H1 (cell line): ENCODE measurements at regions of chr3 and their contacts with region 1.

Region 1: DNA sequence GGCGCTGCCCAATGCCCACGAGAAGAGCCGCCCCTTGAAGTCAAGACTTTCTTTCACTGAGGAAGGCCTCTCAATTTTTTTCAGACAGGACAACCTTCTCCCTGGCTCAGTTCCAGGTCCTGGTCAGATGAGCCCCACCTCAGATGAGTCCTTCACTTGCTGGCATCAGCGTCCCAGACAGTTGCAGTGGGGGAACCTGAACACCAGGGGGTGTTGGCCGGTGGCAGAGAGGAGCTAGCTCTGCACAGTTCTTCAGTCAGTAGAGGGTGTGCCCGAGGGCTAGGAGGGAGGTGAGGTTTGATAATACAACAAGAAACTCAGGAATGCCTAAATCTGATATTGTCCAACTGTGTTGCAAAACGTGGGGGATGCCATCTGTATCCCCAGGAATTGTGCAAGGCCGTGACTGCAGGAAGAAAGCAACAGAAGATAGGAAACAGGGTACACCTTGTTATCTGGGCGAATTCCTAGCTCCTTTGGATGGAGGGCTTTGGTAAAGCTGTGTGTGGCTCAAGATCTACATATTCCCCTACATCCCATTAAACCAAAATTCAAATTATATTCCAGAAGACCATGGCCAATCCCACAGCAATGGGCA is 34.3 kb downstream of the CCR3 start:
- DNase-seq: peak; percentile 29 to 79
- H3K4me3 ChIP-seq: no peak overlapping the region
- H3K27ac ChIP-seq: no peak overlapping the region
- H3K4me1 ChIP-seq: no peaks in the 10 kb centered on the region
- H3K27me3 ChIP-seq: no peaks in the 10 kb centered on the region
- CTCF ChIP-seq: peak; percentile 82 to 86 (median 83)
- EP300 ChIP-seq: no peak
- POLR2A ChIP-seq: no peak
- RAD21 ChIP-seq: peak; percentile 54 to 71

Region 2: DNA sequence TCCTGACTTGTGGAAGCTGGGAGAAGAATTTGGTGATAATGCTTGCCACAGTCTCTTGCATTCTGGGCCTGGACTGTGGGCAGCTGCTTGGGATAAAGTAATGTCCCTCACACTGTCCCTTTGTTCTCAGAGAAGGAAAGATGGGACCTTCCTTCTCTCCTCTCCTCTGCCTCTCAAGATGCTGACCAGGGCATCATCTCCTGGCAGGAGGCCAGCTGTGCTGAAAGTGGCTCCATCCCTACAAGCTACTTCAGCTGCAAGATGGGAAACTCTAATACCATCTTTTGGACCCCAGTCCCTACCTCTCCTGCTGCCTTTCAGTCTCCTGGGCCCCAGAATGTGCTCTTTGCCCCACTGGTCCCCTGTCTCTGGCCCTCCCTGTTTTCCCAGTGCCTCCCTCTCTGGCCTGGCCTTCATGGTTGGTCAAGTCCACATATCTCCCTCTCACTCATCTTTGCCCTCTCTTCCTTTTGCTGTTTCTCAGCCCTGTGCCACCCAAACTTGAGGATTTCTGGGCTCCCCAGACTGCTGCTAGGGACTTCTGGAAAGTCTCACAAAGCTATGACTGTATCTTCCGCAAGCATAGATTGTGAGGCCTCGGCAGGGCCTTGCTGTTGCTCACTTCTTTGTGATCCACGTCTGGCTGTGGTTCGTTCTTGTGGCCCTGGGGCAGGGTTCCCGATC is 473.2 kb before region 1 on chr3:
- CTCF ChIA-PET with region 1: no interaction called
- POLR2A ChIA-PET with region 1: no interaction called
- DNase-seq: no peak
- H3K4me3 ChIP-seq: no peak overlapping the region
- H3K27ac ChIP-seq: no peak overlapping the region
- H3K4me1 ChIP-seq: no peaks in the 10 kb centered on the region; a peak in 1 of 7 replicates
- H3K27me3 ChIP-seq: 0 out of 7 replicates have a peak, but pooled peaks cover 0 to under 1% (median 0%) of the 10 kb centered on the region in 4 experiments
- CTCF ChIP-seq: no peak
- EP300 ChIP-seq: no peak
- POLR2A ChIP-seq: no peak
- RAD21 ChIP-seq: no peak

Region 3: GRCh38 chr3:46266598-46266997 is 10.0 kb before region 1 on chr3:
- CTCF ChIA-PET with region 1: interaction called, 12 read pairs
- POLR2A ChIA-PET with region 1: no interaction called
- DNase-seq: no peak
- H3K4me3 ChIP-seq: no peak overlapping the region
- H3K27ac ChIP-seq: no peak overlapping the region
- H3K4me1 ChIP-seq: peaks cover 0 to 7% (median 3%) of the 10 kb centered on the region in 4 experiments; a peak in 2 of 7 replicates
- H3K27me3 ChIP-seq: no peaks in the 10 kb centered on the region
- CTCF ChIP-seq: no peak
- EP300 ChIP-seq: no peak
- POLR2A ChIP-seq: no peak
- RAD21 ChIP-seq: no peak

Region 4: DNA sequence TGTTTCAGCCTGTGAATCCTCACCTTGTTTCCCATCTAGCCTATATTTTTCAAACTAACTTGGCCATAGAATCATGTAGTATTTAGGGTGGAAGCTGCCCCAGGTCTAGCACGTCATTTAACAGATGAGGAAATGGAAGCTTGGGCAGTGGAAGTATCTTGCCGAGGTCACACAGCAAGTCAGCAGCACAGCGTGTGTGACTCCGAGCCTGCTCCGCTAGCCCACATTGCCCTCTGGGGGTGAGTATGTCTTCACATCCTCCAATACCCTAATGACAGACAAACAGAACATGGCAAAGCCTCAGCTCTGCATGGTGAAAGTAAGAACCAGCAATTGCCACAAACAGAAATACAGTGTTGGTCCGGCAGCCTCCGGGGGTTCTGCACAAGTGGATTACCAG is 92.0 kb after region 1 on chr3:
- CTCF ChIA-PET with region 1: interaction called, 16 read pairs
- POLR2A ChIA-PET with region 1: no interaction called
- DNase-seq: peak; percentile 43 to 60
- H3K4me3 ChIP-seq: no peak overlapping the region
- H3K27ac ChIP-seq: no peak overlapping the region
- H3K4me1 ChIP-seq: no peaks in the 10 kb centered on the region
- H3K27me3 ChIP-seq: peaks cover 0 to 5% (median 0%) of the 10 kb centered on the region in 4 experiments; a peak in 1 of 7 replicates
- CTCF ChIP-seq: peak; percentile 77 to 78 (median 77)
- EP300 ChIP-seq: no peak
- POLR2A ChIP-seq: no peak
- RAD21 ChIP-seq: peak; percentile 89 to 90

Region 5: GRCh38 chr3:46395210-46395731 is 118.7 kb after region 1 on chr3:
- CTCF ChIA-PET with region 1: no interaction called
- POLR2A ChIA-PET with region 1: no interaction called
- DNase-seq: no peak
- H3K4me3 ChIP-seq: no peak overlapping the region
- H3K27ac ChIP-seq: no peak overlapping the region
- H3K4me1 ChIP-seq: peaks cover 0 to 6% (median under 1%) of the 10 kb centered on the region in 4 experiments; a peak in 1 of 7 replicates
- H3K27me3 ChIP-seq: no peaks in the 10 kb centered on the region
- CTCF ChIP-seq: peak; percentile 53 to 56 (median 56)
- EP300 ChIP-seq: no peak
- POLR2A ChIP-seq: no peak
- RAD21 ChIP-seq: peak in 1 of 2 experiments; percentile 38; a peak in 2 of 4 replicates

Region 6: GRCh38 chr3:46642971-46643370 is 366.4 kb after region 1 on chr3:
- CTCF ChIA-PET with region 1: no interaction called
- POLR2A ChIA-PET with region 1: no interaction called
- DNase-seq: no peak
- H3K4me3 ChIP-seq: no peak overlapping the region
- H3K27ac ChIP-seq: no peak overlapping the region
- H3K4me1 ChIP-seq: no peaks in the 10 kb centered on the region
- H3K27me3 ChIP-seq: no peaks in the 10 kb centered on the region
- CTCF ChIP-seq: no peak
- EP300 ChIP-seq: no peak
- POLR2A ChIP-seq: no peak
- RAD21 ChIP-seq: no peak